Body of pancreas (tissue), 4 donors: ENCODE measurements at regions of chr17 and their contacts with region 1.

Region 1: GRCh38 chr17:51298508-51299371 is 38.4 kb downstream of the UTP18 start:
- DNase-seq: peak in 3 of 4 donors; percentile 11 to 22 (median 14)
- ATAC-seq: peak; percentile 42
- H3K4me3 ChIP-seq: no peak overlapping the region
- H3K27ac ChIP-seq: peak overlapping the region in 1 of 4 donors; percentile 52
- H3K4me1 ChIP-seq: peaks cover 15% of the 10 kb centered on the region
- H3K27me3 ChIP-seq: no peaks in the 10 kb centered on the region
- CTCF ChIP-seq: peak; percentile 43 to 74 (median 70)
- POLR2A ChIP-seq: no peak

Region 2: DNA sequence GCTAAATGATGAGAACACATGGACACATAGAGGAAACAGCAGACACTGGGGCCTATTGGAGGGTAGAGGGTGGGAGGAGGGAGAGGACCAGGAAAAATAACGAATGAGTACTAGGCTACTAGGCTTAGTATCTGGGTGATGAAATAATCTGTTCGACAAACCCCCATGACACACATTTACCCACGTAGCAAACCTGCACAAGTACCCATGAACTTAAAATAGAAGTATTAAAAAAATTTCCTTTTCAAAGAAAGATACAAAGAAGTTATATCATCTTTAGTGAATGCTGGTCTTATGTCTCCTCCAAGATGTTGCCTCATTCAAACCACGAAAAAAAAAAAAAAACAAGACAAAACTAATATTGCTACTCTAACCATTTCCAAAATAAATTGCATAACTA is 70.6 kb before region 1 on chr17:
- intact Hi-C with region 1: no loop called
- DNase-seq: no peak
- ATAC-seq: no peak
- H3K4me3 ChIP-seq: no peak overlapping the region
- H3K27ac ChIP-seq: no peak overlapping the region
- H3K4me1 ChIP-seq: peaks cover 29% of the 10 kb centered on the region
- H3K27me3 ChIP-seq: no peaks in the 10 kb centered on the region
- CTCF ChIP-seq: no peak
- POLR2A ChIP-seq: no peak

Region 3: DNA sequence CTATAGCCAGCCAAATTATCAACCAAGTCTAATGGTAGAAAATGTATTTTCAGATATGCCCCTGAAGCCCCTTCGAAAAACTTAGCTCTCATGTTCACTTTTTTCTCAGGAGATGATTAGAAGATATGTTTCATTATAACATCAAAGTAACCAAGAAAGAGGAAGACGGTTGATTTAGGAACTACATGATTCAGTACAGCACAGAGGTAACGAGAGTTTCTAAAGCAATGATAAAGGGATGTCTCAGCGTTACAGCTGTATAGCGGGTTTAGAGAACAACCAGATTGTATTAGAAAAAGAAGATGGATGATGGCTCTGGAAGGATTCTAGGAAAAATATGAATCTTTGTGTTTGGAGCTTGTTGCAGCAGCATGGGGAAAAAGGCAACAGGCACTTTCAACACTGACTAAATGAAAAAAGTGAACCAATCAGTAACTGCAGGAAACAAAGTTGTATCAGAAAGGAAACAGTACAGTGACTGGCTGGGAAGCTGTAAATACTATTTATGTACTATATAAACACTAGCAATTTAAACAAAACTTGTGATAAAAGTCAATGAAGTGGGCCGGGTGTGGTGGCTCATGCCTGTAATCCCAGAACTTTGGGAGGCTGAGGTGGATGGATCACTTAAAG is 60.4 kb before region 1 on chr17:
- intact Hi-C with region 1: no loop called
- DNase-seq: no peak
- ATAC-seq: no peak
- H3K4me3 ChIP-seq: no peak overlapping the region
- H3K27ac ChIP-seq: no peak overlapping the region
- H3K4me1 ChIP-seq: no peaks in the 10 kb centered on the region
- H3K27me3 ChIP-seq: no peaks in the 10 kb centered on the region
- CTCF ChIP-seq: no peak
- POLR2A ChIP-seq: no peak

Region 4: DNA sequence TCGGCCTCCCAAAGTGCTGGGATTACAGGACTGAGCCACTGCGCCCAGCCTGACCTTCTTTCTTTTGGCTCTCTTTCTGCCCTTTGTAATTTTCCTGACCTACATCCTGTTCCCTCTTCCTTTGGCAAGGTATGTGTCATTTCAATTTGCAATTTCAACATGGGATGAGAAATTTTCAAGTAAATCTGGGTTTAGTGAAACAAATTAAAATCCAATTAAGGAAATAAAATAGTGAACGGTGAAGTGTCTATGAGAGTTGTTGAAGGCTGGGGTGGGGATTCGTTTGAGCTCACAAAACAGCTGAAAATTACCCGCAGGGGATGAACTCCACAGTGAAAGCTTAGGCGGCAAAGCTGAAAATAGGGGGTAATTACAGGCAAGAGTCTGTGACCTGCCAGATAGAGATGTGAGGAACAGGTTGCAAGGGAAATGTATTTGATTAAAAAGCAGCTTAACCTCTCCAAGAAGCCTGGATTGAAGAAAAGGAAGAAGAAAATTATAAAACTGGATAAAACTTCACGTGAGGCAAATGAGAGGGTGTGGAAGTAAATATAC is 239.3 kb after region 1 on chr17:
- intact Hi-C with region 1: loop called (anchors 10 kb)
- DNase-seq: no peak
- ATAC-seq: no peak
- H3K4me3 ChIP-seq: no peak overlapping the region
- H3K27ac ChIP-seq: no peak overlapping the region
- H3K4me1 ChIP-seq: no peaks in the 10 kb centered on the region
- H3K27me3 ChIP-seq: no peaks in the 10 kb centered on the region
- CTCF ChIP-seq: no peak
- POLR2A ChIP-seq: no peak

Region 5: DNA sequence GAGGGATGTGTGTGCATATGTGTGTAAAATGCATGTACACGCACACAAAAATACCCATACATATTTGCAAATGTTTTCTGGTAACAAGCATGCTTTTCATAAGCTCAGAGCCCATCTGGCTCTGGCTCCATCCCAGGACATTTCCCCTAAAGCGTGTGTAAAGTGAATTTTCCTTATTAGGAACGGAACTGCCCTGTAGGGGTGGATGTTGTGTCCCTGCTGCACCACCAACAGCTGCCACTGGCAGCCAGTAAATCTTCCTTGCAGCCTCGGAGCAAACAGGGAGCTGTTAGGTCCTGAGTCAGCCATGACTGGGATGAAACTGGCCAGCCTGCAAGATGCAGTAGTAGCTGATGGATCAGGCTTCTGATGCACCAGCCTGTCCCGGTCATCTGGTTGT is 355.1 kb after region 1 on chr17:
- intact Hi-C with region 1: no loop called
- DNase-seq: no peak
- ATAC-seq: no peak
- H3K4me3 ChIP-seq: no peak overlapping the region
- H3K27ac ChIP-seq: no peak overlapping the region
- H3K4me1 ChIP-seq: no peaks in the 10 kb centered on the region
- H3K27me3 ChIP-seq: no peaks in the 10 kb centered on the region
- CTCF ChIP-seq: no peak
- POLR2A ChIP-seq: no peak